ENCODE measurements at regions of chr20 and their contacts with region 1.

Region 1: GRCh38 chr20:32779500-32780211 is 17.5 kb downstream of the DNMT3B start:
- DNase-seq: no peak
- H3K4me3 ChIP-seq: no peak overlapping the region
- H3K27ac ChIP-seq: no peak overlapping the region
- H3K4me1 ChIP-seq: no peaks in the 10 kb centered on the region
- H3K27me3 ChIP-seq: no peaks in the 10 kb centered on the region
- CTCF ChIP-seq: no peak
- POLR2A ChIP-seq: no peak

Region 2: GRCh38 chr20:32664678-32665159 is 114.9 kb before region 1 on chr20:
- CTCF ChIA-PET with region 1: interaction called, 25 read pairs
- POLR2A ChIA-PET with region 1: no interaction called
- dilution Hi-C with region 1: no loop called
- intact Hi-C with region 1: no loop called
- DNase-seq: no peak
- H3K4me3 ChIP-seq: no peak overlapping the region
- H3K27ac ChIP-seq: no peak overlapping the region
- H3K4me1 ChIP-seq: peaks cover 3% of the 10 kb centered on the region
- H3K27me3 ChIP-seq: no peaks in the 10 kb centered on the region
- CTCF ChIP-seq: no peak
- POLR2A ChIP-seq: no peak

Region 3: GRCh38 chr20:32702706-32703425 is 76.8 kb before region 1 on chr20:
- CTCF ChIA-PET with region 1: interaction called, 14 read pairs
- POLR2A ChIA-PET with region 1: no interaction called
- dilution Hi-C with region 1: no loop called
- intact Hi-C with region 1: no loop called
- DNase-seq: no peak
- H3K4me3 ChIP-seq: no peak overlapping the region
- H3K27ac ChIP-seq: no peak overlapping the region
- H3K4me1 ChIP-seq: peaks cover 8% of the 10 kb centered on the region
- H3K27me3 ChIP-seq: no peaks in the 10 kb centered on the region
- CTCF ChIP-seq: no peak
- POLR2A ChIP-seq: no peak

Region 4: DNA sequence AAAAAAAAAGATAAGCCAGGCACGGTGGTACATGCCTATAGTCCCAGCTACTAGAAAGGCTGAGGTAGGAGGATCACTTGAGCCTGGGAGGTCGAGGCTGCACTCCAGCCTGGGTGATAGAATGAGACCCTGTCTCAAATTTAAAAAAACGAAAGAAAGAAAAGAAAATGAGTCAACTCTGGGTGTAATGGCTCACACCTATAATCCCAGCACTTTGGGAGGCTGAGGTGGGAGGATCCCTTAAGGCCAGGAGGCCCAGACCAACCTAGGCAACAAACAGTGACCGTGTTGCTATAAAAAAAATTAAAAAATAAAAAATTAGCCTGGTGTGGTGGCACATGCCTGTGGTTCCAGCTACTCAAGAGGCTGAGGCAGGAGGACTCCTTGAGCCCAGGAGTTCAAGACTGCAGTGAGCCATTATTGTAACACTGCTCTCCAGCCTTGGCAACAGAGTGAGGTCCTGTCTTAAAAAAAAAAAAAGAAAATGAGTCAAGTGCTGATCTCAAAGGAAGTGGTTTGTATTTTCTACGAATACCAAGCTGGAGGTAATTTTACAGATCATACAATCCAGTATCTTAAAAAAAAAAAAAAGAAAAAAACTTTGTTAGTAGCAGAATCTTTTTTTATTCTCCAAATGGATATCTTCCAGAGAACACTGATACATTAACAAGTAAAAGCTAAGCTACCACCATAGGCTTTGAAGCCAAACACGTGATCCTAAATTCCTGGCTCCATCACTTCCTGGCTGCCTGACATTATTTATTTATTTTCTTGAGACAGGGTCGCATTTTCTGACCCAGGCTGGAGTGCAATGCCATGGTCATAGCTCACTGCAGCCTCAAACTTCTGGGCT is 42.1 kb before region 1 on chr20:
- CTCF ChIA-PET with region 1: interaction called, 22 read pairs
- POLR2A ChIA-PET with region 1: no interaction called
- dilution Hi-C with region 1: no loop called
- intact Hi-C with region 1: no loop called
- DNase-seq: peak; percentile 67
- H3K4me3 ChIP-seq: no peak overlapping the region
- H3K27ac ChIP-seq: peak overlapping the region; percentile 76
- H3K4me1 ChIP-seq: peaks cover 9% of the 10 kb centered on the region
- H3K27me3 ChIP-seq: no peaks in the 10 kb centered on the region
- CTCF ChIP-seq: no peak
- POLR2A ChIP-seq: no peak

Region 5: GRCh38 chr20:32789896-32790750 is 10.5 kb after region 1 on chr20:
- CTCF ChIA-PET with region 1: interaction called, 11 read pairs
- POLR2A ChIA-PET with region 1: no interaction called
- dilution Hi-C with region 1: no loop called
- intact Hi-C with region 1: no loop called
- DNase-seq: peak; percentile 64
- H3K4me3 ChIP-seq: no peak overlapping the region
- H3K27ac ChIP-seq: no peak overlapping the region
- H3K4me1 ChIP-seq: peaks cover 10% of the 10 kb centered on the region
- H3K27me3 ChIP-seq: no peaks in the 10 kb centered on the region
- CTCF ChIP-seq: peak; percentile 97 to 99
- POLR2A ChIP-seq: no peak

Region 6: GRCh38 chr20:32845786-32846185 is 66.1 kb after region 1 on chr20:
- CTCF ChIA-PET with region 1: no interaction called
- POLR2A ChIA-PET with region 1: no interaction called
- dilution Hi-C with region 1: no loop called
- intact Hi-C with region 1: no loop called
- DNase-seq: no peak
- H3K4me3 ChIP-seq: no peak overlapping the region
- H3K27ac ChIP-seq: no peak overlapping the region
- H3K4me1 ChIP-seq: no peaks in the 10 kb centered on the region
- H3K27me3 ChIP-seq: no peaks in the 10 kb centered on the region
- CTCF ChIP-seq: no peak
- POLR2A ChIP-seq: no peak

Measured in endothelial cell of umbilical vein (primary cell).